ENCODE measurements at regions of chr7 and their contacts with region 1.

Region 1: GRCh38 chr7:100081535-100082102 is at the start of gene ZNF3:
- DNase-seq: peak; percentile 97 to 100 (median 99)
- H3K4me3 ChIP-seq: peak within 1 kb of the TSS; percentile 62 to 100 (median 97)
- H3K27ac ChIP-seq: peak within 1 kb of the TSS; percentile 28 to 97 (median 88)
- H3K27me3 ChIP-seq: no peaks in the 10 kb centered on the region
- CTCF ChIP-seq: peak; percentile 88 to 100 (median 98)
- total RNA-seq, gene ZNF3: 17.5 to 42.7 (median 26.8) TPM

Region 2: GRCh38 chr7:99762680-99763327 is 318.8 kb before region 1 on chr7:
- intact Hi-C with region 1: no loop called
- DNase-seq: no peak
- H3K4me3 ChIP-seq: no peak overlapping the region
- H3K27ac ChIP-seq: no peak overlapping the region
- H3K27me3 ChIP-seq: no peaks in the 10 kb centered on the region
- CTCF ChIP-seq: no peak

Region 3: GRCh38 chr7:100015232-100016209 is 66.1 kb before region 1 on chr7 and contains the start of gene ZKSCAN1:
- intact Hi-C with region 1: loop called in 1 of 2 experiments (anchors 1 kb)
- DNase-seq: peak; percentile 84 to 93 (median 90)
- H3K4me3 ChIP-seq: peak within 1 kb of the TSS; percentile 65 to 100 (median 99)
- H3K27ac ChIP-seq: peak within 1 kb of the TSS; percentile 92 to 100 (median 99)
- H3K27me3 ChIP-seq: no peaks in the 10 kb centered on the region
- CTCF ChIP-seq: peak in 13 of 56 donors; percentile 7 to 40 (median 22)
- total RNA-seq, gene ZKSCAN1: 96.1 to 181 (median 132) TPM

Region 4: DNA sequence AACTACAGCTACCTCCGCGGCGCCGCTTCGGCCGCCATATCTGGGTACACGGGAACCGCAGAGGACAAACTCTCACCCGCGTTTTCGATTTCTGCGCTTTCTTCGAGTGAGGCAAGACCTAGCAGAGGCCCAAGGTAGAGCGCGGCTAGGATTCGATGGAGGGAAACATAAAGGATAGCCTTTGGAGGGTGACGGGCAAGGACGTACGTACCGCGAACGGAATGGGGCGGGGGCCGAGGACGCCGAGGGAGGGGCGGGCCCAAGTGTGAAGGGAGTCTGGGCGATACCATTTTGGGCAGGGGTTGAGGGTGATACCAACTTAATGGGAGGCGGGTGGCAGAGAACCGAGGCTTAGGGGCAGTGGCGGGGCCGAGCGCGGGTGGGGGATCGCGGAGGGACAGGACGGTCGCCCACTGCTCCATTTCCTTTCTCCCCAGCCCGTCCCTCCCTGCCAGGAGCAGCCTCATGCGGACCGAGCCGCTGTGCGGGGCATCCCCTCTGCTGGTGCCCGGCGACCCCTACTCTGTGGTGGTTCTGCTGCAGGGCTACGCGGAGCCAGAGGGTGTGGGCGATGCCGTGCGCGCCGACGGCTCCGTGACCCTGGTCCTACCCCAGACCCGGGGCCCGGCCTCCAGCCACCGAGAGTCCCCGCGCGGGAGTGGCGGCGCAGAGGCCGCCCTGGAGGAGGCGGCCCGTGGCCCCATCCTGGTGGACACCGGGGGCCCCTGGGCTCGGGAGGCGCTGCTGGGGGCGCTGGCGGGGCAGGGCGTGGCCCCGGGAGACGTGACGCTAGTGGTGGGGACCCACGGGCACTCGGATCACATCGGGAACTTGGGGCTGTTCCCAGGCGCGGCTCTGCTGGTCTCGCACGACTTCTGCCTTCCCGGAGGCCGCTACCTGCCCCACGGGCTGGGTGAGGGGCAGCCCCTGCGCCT is 45.6 kb after region 1 on chr7 and contains the start of gene MBLAC1:
- intact Hi-C with region 1: no loop called
- DNase-seq: peak; percentile 78 to 94 (median 90)
- H3K4me3 ChIP-seq: peak within 1 kb of the TSS; percentile 64 to 98 (median 93)
- H3K27ac ChIP-seq: peak within 1 kb of the TSS; percentile 55 to 99 (median 95)
- H3K27me3 ChIP-seq: no peaks in the 10 kb centered on the region
- CTCF ChIP-seq: peak in 9 of 56 donors; percentile 1 to 27 (median 9)
- total RNA-seq, gene MBLAC1: 5.6 to 16.5 (median 11.0) TPM